AG04450 (cell line): ENCODE measurements at regions of chr1 and their contacts with region 1.

Region 1: DNA sequence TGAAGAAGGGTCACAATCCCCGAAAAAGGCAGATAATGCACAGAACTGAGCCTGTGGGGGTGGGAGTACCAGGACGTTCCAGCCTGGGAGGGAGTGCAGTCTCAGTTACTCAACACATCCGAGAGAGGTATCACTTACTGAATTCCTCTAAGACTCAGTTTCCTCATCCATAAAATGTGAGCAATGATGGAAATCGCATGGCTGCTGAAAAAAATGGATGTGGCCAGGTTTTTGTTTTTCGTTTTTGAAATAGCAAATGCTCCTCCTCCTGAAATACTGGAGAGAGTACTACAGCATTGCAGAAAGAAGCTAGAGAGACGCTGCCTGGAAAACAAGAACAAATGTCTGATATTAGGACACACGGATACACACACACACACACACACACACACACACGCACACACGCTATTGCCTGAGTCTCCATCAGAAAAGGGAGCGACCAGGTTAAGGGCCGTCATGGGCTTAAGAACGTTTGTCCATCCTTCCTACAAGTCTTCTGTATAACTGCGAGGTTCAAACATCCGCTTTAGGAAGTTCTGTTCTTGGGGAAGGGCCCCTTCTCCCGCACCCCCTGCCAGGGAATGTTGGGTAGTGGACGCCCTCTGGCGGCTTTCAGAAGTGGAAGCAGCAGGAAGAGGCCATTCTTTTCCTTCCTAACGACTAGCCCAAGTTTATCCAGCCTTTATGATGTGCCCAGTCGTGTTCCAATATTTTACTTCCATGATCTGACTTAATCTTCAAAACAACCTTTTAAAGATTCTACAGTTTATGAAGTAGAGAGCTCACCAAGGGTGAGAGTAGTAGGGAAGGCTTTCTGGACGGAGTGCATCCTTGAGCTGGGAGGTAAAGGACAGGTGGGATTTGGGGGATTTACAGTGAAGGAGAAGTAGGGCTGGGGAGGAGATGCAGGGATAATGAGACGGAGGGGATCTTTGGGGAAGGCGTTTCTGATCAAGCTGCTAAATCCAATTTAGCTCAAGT is 699 bp upstream of the NES start:
- DNase-seq: no peak
- H3K4me3 ChIP-seq: peak overlapping the region; percentile 64
- H3K27ac ChIP-seq: peak overlapping the region; percentile 31
- H3K27me3 ChIP-seq: peaks cover 12% of the 10 kb centered on the region
- CTCF ChIP-seq: peak; percentile 96

Region 2: GRCh38 chr1:156560585-156561183 is 117.2 kb before region 1 on chr1:
- CTCF ChIA-PET with region 1: no interaction called
- POLR2A ChIA-PET with region 1: no interaction called
- DNase-seq: no peak
- H3K4me3 ChIP-seq: no peak overlapping the region
- H3K27ac ChIP-seq: no peak overlapping the region
- H3K27me3 ChIP-seq: no peaks in the 10 kb centered on the region
- CTCF ChIP-seq: no peak

Region 3: DNA sequence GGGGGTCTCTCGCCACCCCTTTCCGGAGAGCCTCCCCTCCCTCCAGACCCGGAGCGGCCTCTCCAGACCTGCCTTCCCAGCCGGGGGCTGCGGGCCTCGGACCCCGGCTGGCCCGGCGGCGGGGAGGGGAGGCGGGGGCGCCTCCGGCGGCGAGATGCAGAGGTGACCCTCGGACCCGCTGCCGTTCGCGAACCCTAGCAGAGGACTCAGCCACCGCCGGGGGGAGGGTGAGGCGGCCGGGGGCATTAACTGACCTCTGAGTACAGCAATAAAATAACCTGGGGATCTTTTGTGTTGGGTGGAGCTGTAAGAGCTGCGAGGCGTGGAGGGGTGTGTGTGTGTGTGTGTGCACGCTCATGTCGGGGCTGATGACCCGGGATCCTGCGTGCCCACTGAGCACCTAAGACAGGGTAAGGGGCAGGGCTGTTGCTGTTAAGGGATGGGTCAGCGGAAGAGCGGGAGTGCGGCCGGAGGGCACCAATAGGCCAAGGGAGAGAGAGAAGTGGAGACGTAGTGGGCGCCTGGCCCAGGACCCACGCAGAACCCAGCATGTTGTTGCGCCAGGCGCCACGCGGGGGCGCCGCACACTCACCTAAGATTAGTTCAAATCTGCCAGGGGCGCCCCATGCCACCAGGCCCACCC is 52.3 kb before region 1 on chr1:
- CTCF ChIA-PET with region 1: interaction called, 97 read pairs
- POLR2A ChIA-PET with region 1: no interaction called
- DNase-seq: no peak
- H3K4me3 ChIP-seq: no peak overlapping the region
- H3K27ac ChIP-seq: no peak overlapping the region
- H3K27me3 ChIP-seq: peaks cover 46% of the 10 kb centered on the region
- CTCF ChIP-seq: peak; percentile 80

Region 4: GRCh38 chr1:156652131-156652991 is 25.5 kb before region 1 on chr1:
- CTCF ChIA-PET with region 1: interaction called, 204 read pairs
- POLR2A ChIA-PET with region 1: no interaction called
- DNase-seq: no peak
- H3K4me3 ChIP-seq: no peak overlapping the region
- H3K27ac ChIP-seq: no peak overlapping the region
- H3K27me3 ChIP-seq: peaks cover 64% of the 10 kb centered on the region
- CTCF ChIP-seq: no peak

Region 5: DNA sequence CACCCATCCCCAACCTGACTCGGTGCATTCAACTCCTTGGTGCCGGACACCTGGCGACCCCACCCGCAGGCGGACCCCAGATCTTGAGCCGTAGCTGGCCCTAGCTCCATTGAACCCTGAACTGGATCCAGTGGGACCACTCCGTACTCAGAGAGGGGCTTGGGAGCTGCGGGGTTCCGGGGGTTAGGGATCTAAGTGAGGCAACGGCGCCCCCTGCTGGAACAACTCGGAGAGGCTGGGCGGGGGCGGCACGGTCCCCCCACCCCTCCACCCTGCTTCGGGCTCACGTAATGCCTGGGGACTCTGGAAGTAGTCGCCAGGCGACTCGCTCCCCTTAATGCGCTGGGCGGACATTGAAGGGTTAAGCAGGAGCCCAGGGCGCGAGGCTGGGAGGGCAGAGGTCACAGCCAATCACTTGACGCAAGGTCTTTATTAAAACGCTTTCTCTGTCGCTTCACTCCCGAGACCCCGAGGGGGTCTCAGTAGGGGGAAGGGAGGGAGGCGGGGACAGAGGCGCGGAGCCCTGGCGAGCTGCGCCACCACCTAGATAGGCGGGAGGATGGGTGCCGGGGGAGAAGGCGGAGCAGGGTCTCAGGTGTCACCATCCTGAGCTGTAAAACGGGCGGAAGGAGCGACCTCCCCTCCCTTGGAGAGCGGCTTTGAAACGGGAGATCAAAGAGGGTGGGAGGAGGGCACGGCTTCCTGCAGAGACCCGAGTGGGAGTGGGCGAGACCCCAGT is 28.2 kb after region 1 on chr1:
- CTCF ChIA-PET with region 1: interaction called, 26 read pairs
- POLR2A ChIA-PET with region 1: interaction called, 3 read pairs
- DNase-seq: no peak
- H3K4me3 ChIP-seq: peak overlapping the region; percentile 52
- H3K27ac ChIP-seq: peak overlapping the region; percentile 57
- H3K27me3 ChIP-seq: no peaks in the 10 kb centered on the region
- CTCF ChIP-seq: peak; percentile 76

Region 6: DNA sequence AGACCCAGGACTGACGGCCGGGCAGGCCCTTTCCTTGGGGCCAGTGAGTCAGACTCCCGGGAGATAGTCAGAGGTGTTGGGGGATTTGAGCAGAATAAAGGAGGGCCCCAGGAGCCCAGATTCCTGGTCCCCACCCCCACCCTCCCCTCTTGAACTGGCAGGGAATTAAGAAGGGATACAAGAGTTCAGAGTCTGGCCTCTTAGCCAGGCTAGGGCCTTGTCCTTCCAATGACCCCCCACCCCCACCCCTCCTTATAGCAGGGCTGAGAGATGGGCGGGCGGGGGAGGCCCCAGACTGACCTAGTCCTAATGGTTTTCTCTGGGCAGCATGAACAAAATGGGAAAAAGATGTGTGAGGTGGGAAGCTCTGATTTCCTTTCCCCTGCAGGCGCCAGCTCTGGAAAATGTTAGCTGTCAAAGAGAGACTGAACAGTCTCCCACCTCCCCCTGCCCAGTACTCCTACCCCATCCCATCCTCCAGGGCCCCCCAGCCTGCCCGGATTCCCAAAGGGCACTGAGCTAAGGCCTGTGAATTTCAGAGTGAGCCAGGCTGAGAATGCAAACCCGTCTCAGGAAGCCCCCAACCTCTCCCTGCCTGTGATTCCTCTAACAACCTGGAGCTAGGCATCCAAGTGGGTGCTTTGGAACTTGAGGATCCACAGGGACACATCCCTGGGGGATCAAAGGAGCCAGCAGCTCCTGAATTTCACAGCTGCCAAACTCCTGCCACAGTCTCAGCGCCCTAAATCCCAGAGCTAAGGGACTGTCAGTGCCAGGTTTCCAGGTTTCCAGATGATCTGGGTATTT is 33.3 kb after region 1 on chr1:
- CTCF ChIA-PET with region 1: interaction called, 26 read pairs
- POLR2A ChIA-PET with region 1: interaction called, 3 read pairs
- DNase-seq: no peak
- H3K4me3 ChIP-seq: no peak overlapping the region
- H3K27ac ChIP-seq: no peak overlapping the region
- H3K27me3 ChIP-seq: no peaks in the 10 kb centered on the region
- CTCF ChIP-seq: no peak

Region 7: DNA sequence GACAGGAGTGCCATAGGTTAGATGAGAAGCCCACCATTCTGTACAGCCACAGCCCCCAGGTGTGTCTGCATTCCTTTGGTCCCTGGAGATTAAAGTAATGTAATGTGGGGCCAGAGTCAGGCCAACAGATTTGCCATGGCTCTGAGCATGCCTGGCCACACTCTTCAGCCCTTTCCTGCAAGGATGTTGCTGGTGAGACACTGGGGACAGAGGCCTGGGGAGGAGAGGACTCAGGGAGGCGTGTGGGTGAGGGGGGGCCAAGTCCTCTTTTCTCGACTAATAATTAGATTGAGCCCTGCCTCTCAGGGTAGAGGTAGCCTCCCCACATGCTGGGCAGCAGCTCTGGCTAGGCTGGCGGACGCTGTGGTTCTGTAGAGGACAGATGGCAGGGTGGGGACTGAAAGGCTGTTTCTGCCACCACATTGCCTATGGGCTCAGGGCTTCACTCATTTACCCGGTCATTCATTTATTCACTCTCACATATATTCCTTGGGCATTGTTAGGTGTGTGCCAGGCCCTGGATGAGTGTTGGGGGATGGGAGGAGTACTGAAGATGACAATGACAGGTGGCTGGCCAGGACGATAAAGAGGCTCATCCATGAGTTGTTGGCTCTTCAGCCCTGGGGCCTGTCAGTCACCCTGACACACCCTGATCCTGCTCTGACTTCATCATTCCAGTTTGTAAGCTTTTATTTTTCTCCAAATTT is 82.3 kb after region 1 on chr1:
- CTCF ChIA-PET with region 1: no interaction called
- POLR2A ChIA-PET with region 1: no interaction called
- DNase-seq: no peak
- H3K4me3 ChIP-seq: no peak overlapping the region
- H3K27ac ChIP-seq: no peak overlapping the region
- H3K27me3 ChIP-seq: no peaks in the 10 kb centered on the region
- CTCF ChIP-seq: no peak